ENCODE measurements at regions of chr1 and their contacts with region 1.

Region 1: GRCh38 chr1:165645654-165646366 is 14.8 kb downstream of the MGST3 start:
- DNase-seq: no peak
- ATAC-seq: no peak
- H3K4me3 ChIP-seq: peak overlapping the region in 1 of 5 experiments; percentile 6
- H3K4me3 Mint-ChIP-seq: peak overlapping the region; percentile 26
- H3K27ac ChIP-seq: no peak overlapping the region
- H3K27ac Mint-ChIP-seq: peak overlapping the region; percentile 46
- H3K4me1 ChIP-seq: peaks cover 14 to 18% of the 10 kb centered on the region in 2 donors
- H3K4me1 Mint-ChIP-seq: peaks cover 23% of the 10 kb centered on the region
- H3K27me3 ChIP-seq: no peaks in the 10 kb centered on the region
- H3K27me3 Mint-ChIP-seq: no peaks in the 10 kb centered on the region
- CTCF ChIP-seq: no peak

Region 2: DNA sequence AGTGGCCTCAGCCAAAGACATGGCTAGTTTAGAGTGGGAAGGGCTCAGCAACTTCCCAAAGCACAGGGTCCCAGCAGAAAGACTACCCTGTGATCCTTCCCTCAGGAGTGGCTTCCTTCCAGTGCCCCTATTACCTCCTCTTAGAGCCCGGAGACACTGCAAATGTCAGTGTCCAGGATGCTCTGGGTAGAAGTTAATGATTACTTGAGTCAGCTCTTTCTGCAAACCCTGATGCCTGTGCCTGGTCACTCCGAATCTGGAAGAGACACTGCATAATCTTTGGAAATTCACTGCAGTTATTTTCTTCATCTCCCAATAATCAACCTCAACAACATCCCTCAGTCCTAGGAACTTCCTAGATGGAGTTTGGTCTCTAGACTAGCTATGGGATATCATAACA is 42.0 kb before region 1 on chr1:
- CTCF ChIA-PET with region 1: interaction called, 13 read pairs
- POLR2A ChIA-PET with region 1: no interaction called
- intact Hi-C with region 1: no loop called
- DNase-seq: no peak
- ATAC-seq: no peak
- H3K4me3 ChIP-seq: no peak overlapping the region
- H3K4me3 Mint-ChIP-seq: no peak overlapping the region
- H3K27ac ChIP-seq: no peak overlapping the region
- H3K27ac Mint-ChIP-seq: no peak overlapping the region
- H3K4me1 ChIP-seq: peaks cover 4 to 6% of the 10 kb centered on the region in 2 donors
- H3K4me1 Mint-ChIP-seq: peaks cover 3% of the 10 kb centered on the region
- H3K27me3 ChIP-seq: peaks cover 0 to 7% (median 0%) of the 10 kb centered on the region in 4 experiments
- H3K27me3 Mint-ChIP-seq: peaks cover 21% of the 10 kb centered on the region
- CTCF ChIP-seq: no peak